Activated B cell treated with CpG ODN at 0.5 μM for 24 hours (primary cell): ENCODE measurements at regions of chr4 and their contacts with region 1.

Region 1: GRCh38 chr4:113657586-113658233 is 103.8 kb downstream of the CAMK2D start:
- DNase-seq: no peak
- ATAC-seq: no peak
- H3K4me3 Mint-ChIP-seq: no peak overlapping the region
- H3K27ac Mint-ChIP-seq: no peak overlapping the region
- H3K4me1 Mint-ChIP-seq: peaks cover 51% of the 10 kb centered on the region
- H3K27me3 Mint-ChIP-seq: no peaks in the 10 kb centered on the region
- CTCF ChIP-seq: no peak

Region 2: GRCh38 chr4:113673450-113673849 is 15.7 kb after region 1 on chr4:
- CTCF ChIA-PET with region 1: no interaction called
- POLR2A ChIA-PET with region 1: no interaction called
- intact Hi-C with region 1: loop called (anchors 2 kb)
- DNase-seq: peak; percentile 14
- ATAC-seq: peak; percentile 95
- H3K4me3 Mint-ChIP-seq: peak overlapping the region; percentile 41
- H3K27ac Mint-ChIP-seq: peak overlapping the region; percentile 53
- H3K4me1 Mint-ChIP-seq: peaks cover 54% of the 10 kb centered on the region
- H3K27me3 Mint-ChIP-seq: no peaks in the 10 kb centered on the region
- CTCF ChIP-seq: no peak

Region 3: GRCh38 chr4:113682730-113683537 is 25.2 kb after region 1 on chr4:
- CTCF ChIA-PET with region 1: no interaction called
- POLR2A ChIA-PET with region 1: no interaction called
- intact Hi-C with region 1: loop called (anchors 2 kb)
- DNase-seq: peak; percentile 33
- ATAC-seq: peak; percentile 93
- H3K4me3 Mint-ChIP-seq: peak overlapping the region; percentile 13
- H3K27ac Mint-ChIP-seq: peak overlapping the region; percentile 70
- H3K4me1 Mint-ChIP-seq: peaks cover 53% of the 10 kb centered on the region
- H3K27me3 Mint-ChIP-seq: no peaks in the 10 kb centered on the region
- CTCF ChIP-seq: no peak

Region 4: GRCh38 chr4:113738251-113738650 is 80.5 kb after region 1 on chr4:
- CTCF ChIA-PET with region 1: no interaction called
- POLR2A ChIA-PET with region 1: interaction called, 10 read pairs
- intact Hi-C with region 1: no loop called
- DNase-seq: no peak
- ATAC-seq: no peak
- H3K4me3 Mint-ChIP-seq: no peak overlapping the region
- H3K27ac Mint-ChIP-seq: peak overlapping the region; percentile 44
- H3K4me1 Mint-ChIP-seq: peaks cover 66% of the 10 kb centered on the region
- H3K27me3 Mint-ChIP-seq: no peaks in the 10 kb centered on the region
- CTCF ChIP-seq: no peak